ENCODE measurements at regions of chr12 and their contacts with region 1.

Region 1: DNA sequence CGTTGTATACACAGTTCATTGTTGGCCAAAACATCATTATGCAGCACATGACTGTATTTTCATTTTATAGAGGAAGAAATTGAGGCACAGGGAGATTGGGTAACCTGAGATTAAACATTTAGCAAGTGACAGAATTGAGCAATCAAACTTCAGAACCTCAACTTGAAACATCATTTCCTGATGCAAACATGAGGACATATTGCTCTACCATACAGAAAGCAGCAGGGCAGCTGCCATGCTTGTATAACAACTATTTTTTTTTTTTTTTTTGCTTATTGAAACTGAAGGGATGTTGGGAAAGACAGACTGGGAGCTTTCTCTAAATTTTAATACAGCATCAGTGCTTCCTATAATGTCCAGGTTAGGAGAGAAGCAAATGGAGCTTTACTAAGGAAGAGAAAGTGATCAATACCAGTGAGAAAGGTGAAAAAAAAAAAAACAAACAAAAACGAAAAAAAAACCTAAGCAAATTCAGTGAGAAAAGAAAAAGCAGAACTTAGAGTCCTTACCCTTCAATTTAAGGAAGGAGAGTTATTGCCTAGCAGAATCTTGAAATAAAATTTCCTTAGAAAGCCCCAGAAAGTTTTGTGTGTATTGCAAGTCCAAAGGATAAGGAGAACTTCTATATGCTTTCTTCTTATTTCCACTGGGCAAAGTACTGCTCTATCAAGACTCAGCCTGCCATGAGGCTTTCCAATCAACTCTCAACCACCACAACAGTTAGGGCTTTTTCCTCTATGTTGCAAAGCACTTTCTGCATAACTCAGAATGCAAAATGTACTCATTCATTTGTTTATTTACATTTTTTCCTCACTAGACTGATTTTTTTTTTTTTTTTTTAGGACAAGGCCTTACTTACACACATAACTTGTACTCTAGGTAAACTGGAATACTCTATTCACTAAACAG is 21.6 kb downstream of the BTG1 start:
- DNase-seq: no peak
- H3K4me3 ChIP-seq: no peak overlapping the region
- H3K4me3 Mint-ChIP-seq: no peak overlapping the region
- H3K27ac ChIP-seq: no peak overlapping the region
- H3K27ac Mint-ChIP-seq: peak overlapping the region in 1 of 8 donors; percentile 15
- H3K4me1 ChIP-seq: peaks cover 51% of the 10 kb centered on the region
- H3K4me1 Mint-ChIP-seq: peaks cover 42 to 58% (median 52%) of the 10 kb centered on the region in 3 donors
- H3K27me3 ChIP-seq: no peaks in the 10 kb centered on the region
- H3K27me3 Mint-ChIP-seq: peaks cover 0 to 2% of the 10 kb centered on the region in 2 donors

Region 2: DNA sequence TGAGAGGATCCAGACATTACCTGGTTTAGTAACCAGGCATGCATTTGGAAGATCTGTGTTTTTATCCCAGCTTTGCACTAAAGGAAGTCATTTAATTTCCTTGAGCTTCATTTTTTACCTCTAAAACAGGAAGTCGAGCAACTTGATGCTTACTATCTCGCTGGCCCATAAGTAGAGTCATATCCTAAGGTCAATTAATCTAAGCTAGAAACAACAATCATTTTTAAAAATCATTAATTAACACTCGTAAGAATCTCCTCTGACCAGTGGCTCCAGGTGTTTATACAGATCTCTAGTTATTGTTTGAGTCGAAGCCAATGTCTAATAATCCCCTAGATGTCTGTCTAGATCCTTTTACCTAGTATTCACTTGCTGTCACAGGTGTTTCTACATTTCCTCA is 585.6 kb before region 1 on chr12:
- CTCF ChIA-PET with region 1: no interaction called
- POLR2A ChIA-PET with region 1: interaction called, 12 read pairs
- DNase-seq: no peak
- H3K4me3 ChIP-seq: no peak overlapping the region
- H3K4me3 Mint-ChIP-seq: no peak overlapping the region
- H3K27ac ChIP-seq: no peak overlapping the region
- H3K27ac Mint-ChIP-seq: no peak overlapping the region
- H3K4me1 ChIP-seq: no peaks in the 10 kb centered on the region
- H3K4me1 Mint-ChIP-seq: no peaks in the 10 kb centered on the region
- H3K27me3 ChIP-seq: no peaks in the 10 kb centered on the region
- H3K27me3 Mint-ChIP-seq: peaks cover 7 to 13% of the 10 kb centered on the region in 2 donors

Region 3: GRCh38 chr12:91951571-91951970 is 172.5 kb before region 1 on chr12:
- CTCF ChIA-PET with region 1: no interaction called
- POLR2A ChIA-PET with region 1: interaction called, 10 read pairs
- DNase-seq: no peak
- H3K4me3 ChIP-seq: no peak overlapping the region
- H3K4me3 Mint-ChIP-seq: no peak overlapping the region
- H3K27ac ChIP-seq: no peak overlapping the region
- H3K27ac Mint-ChIP-seq: no peak overlapping the region
- H3K4me1 ChIP-seq: peaks cover 10% of the 10 kb centered on the region
- H3K4me1 Mint-ChIP-seq: peaks cover 11 to 23% (median 17%) of the 10 kb centered on the region in 3 donors
- H3K27me3 ChIP-seq: no peaks in the 10 kb centered on the region
- H3K27me3 Mint-ChIP-seq: no peaks in the 10 kb centered on the region

Region 4: DNA sequence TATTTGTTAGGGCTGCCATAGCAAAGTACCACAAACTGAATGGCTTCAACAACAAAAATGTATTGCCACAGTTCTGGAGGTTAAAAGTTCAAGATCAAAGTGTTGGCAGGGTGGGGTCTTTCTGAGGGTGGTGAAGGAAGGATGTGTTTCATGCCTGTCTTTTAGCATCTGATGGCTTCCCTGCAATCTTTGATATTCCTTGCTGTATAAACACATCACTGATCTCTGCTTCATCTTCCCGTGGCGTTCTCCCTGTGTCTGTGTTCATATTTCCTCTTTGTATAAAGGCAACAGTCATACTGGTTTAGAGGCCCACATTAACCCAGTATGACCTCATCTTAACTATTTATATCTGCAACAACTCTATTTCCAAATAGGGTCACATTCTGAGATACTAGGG is 145.9 kb before region 1 on chr12:
- CTCF ChIA-PET with region 1: no interaction called
- POLR2A ChIA-PET with region 1: no interaction called
- DNase-seq: peak in 4 of 5 donors; percentile 18 to 84 (median 72)
- H3K4me3 ChIP-seq: no peak overlapping the region
- H3K4me3 Mint-ChIP-seq: peak overlapping the region; percentile 6 to 55 (median 34)
- H3K27ac ChIP-seq: no peak overlapping the region
- H3K27ac Mint-ChIP-seq: peak overlapping the region; percentile 1 to 96 (median 60)
- H3K4me1 ChIP-seq: peaks cover 22% of the 10 kb centered on the region
- H3K4me1 Mint-ChIP-seq: peaks cover 18 to 49% (median 40%) of the 10 kb centered on the region in 3 donors
- H3K27me3 ChIP-seq: no peaks in the 10 kb centered on the region
- H3K27me3 Mint-ChIP-seq: peaks cover 0 to 1% of the 10 kb centered on the region in 2 donors

Region 5: DNA sequence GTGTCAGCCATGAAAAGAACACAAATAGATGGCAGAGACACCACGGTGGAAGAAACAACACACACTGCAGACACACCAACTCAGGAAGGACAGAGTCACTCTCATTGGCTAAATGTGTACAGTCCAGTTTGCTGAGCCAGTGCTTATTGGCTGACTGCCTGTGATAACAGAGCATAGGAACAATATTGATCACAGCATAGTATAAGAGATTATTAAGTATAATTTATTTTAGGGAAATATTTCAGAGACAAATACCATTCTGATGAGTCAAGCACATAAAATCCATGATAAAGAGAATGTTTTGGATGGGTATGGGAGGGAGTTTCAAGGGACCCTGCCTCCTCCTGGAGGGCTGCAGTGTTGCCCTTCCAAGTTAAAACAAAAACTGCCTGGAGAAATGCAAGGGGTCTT is 29.3 kb before region 1 on chr12:
- CTCF ChIA-PET with region 1: no interaction called
- POLR2A ChIA-PET with region 1: no interaction called
- DNase-seq: no peak
- H3K4me3 ChIP-seq: no peak overlapping the region
- H3K4me3 Mint-ChIP-seq: no peak overlapping the region
- H3K27ac ChIP-seq: no peak overlapping the region
- H3K27ac Mint-ChIP-seq: peak overlapping the region in 2 of 8 donors; percentile 21 to 57
- H3K4me1 ChIP-seq: peaks cover 24% of the 10 kb centered on the region
- H3K4me1 Mint-ChIP-seq: peaks cover 18 to 56% (median 51%) of the 10 kb centered on the region in 3 donors
- H3K27me3 ChIP-seq: no peaks in the 10 kb centered on the region
- H3K27me3 Mint-ChIP-seq: no peaks in the 10 kb centered on the region

Measured in CD8-positive, alpha-beta memory T cell (primary cell).